Sigmoid colon (tissue), 7 donors: ENCODE measurements at regions of chr2 and their contacts with region 1.

Region 1: DNA sequence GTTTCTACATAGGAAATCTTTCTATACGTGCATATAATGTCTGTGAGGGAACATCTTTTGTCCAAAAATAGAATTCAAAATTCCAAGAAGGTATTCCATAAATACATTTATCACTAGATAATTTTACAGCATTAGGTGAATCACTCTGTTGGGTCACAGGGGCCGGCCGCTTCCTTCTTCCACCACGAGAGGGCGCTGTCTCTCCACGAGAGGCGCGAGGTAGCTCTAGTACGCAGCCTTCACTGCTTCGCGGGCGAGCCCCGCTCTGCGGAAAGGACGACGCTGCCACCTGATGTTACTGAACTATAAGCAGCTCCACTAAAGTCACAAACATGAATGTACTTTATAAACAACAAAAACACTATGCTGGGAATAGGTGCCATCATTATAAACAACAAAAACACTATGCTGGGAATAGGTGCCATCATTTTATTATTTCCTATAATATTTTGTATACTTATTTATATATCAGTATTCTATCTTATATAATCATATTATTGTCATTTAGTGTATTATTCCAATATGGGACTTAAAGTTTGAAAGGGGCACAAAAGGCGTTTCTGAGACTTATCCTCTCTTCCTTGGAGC is 69.4 kb upstream of the REV1 start:
- DNase-seq: peak; percentile 91
- H3K4me3 ChIP-seq: no peak overlapping the region
- H3K27ac ChIP-seq: no peak overlapping the region
- H3K4me1 ChIP-seq: no peaks in the 10 kb centered on the region
- H3K27me3 ChIP-seq: no peaks in the 10 kb centered on the region
- CTCF ChIP-seq: peak; percentile 84 to 99 (median 96)
- EP300 ChIP-seq: no peak
- POLR2A ChIP-seq: no peak

Region 2: GRCh38 chr2:100242891-100243619 is 683.9 kb after region 1 on chr2:
- intact Hi-C with region 1: loop called (anchors 1 kb)
- DNase-seq: peak; percentile 84
- H3K4me3 ChIP-seq: no peak overlapping the region
- H3K27ac ChIP-seq: no peak overlapping the region
- H3K4me1 ChIP-seq: peaks cover 0 to 10% (median 8%) of the 10 kb centered on the region in 4 donors
- H3K27me3 ChIP-seq: no peaks in the 10 kb centered on the region
- CTCF ChIP-seq: peak; percentile 67 to 76 (median 73)
- EP300 ChIP-seq: no peak
- POLR2A ChIP-seq: no peak

Region 3: GRCh38 chr2:100262555-100263320 is 703.6 kb after region 1 on chr2:
- intact Hi-C with region 1: loop called (anchors 1 kb)
- DNase-seq: peak; percentile 84
- H3K4me3 ChIP-seq: no peak overlapping the region
- H3K27ac ChIP-seq: no peak overlapping the region
- H3K4me1 ChIP-seq: peaks cover 0 to 10% (median 6%) of the 10 kb centered on the region in 4 donors
- H3K27me3 ChIP-seq: no peaks in the 10 kb centered on the region
- CTCF ChIP-seq: peak; percentile 79 to 99 (median 92)
- EP300 ChIP-seq: no peak
- POLR2A ChIP-seq: no peak

Region 4: GRCh38 chr2:100381240-100381639 is 822.1 kb after region 1 on chr2:
- intact Hi-C with region 1: loop called (anchors 5 kb)
- DNase-seq: peak; percentile 88
- H3K4me3 ChIP-seq: no peak overlapping the region
- H3K27ac ChIP-seq: no peak overlapping the region
- H3K4me1 ChIP-seq: no peaks in the 10 kb centered on the region
- H3K27me3 ChIP-seq: no peaks in the 10 kb centered on the region
- CTCF ChIP-seq: peak; percentile 73 to 89 (median 80)
- EP300 ChIP-seq: no peak
- POLR2A ChIP-seq: no peak